Activated CD4-positive, alpha-beta T cell treated with anti-CD3 and anti-CD28 coated beads for 36 hours (primary cell): ENCODE measurements at regions of chr9 and their contacts with region 1.

Region 1: GRCh38 chr9:128159784-128160602 is at the start of gene BBLN:
- DNase-seq: peak; percentile 98
- ATAC-seq: peak; percentile 91
- H3K4me3 Mint-ChIP-seq: peak within 1 kb of the TSS; percentile 74
- H3K27ac Mint-ChIP-seq: peak within 1 kb of the TSS; percentile 90
- H3K4me1 Mint-ChIP-seq: peaks cover 19% of the 10 kb centered on the region
- H3K27me3 Mint-ChIP-seq: no peaks in the 10 kb centered on the region
- total RNA-seq, gene BBLN: 64.4 to 68.5 TPM

Region 2: DNA sequence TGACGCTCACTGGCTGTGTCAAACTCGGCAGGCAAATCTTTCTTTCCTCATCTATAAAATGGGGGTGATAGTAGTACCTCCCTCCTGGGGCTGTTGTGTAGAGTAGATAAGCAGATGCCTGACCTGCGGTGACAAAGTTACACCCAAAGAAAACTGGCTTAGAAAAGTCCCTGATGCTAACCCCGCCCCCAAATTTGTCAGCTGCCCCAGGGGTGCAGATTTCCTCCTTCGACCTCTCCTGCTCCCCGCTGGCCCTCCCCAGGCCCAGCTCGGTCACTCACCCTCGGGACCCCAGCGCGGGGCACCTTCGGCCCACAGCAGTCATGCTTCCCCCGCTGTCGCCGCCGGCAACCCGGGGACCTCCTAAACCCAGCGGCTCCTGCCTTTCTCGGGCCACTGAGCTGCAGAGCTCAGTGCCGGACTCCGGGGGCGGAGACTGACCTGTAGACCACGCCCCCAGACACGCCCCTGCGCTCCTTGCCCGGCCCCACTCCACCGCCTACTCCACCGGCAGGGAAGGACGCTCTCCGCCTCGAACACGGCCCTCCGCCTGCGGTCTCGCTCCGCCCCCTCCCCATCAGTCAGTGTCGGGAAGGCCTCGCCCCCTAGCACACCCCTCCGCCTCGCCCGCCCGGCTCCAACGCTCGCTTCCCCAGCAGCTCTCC is 389.0 kb before region 1 on chr9:
- CTCF ChIA-PET with region 1: no interaction called
- POLR2A ChIA-PET with region 1: no interaction called
- intact Hi-C with region 1: loop called in 1 of 2 experiments (anchors 1 kb)
- DNase-seq: peak; percentile 99
- ATAC-seq: peak; percentile 95
- H3K4me3 Mint-ChIP-seq: peak overlapping the region; percentile 80
- H3K27ac Mint-ChIP-seq: peak overlapping the region; percentile 80
- H3K4me1 Mint-ChIP-seq: peaks cover 59% of the 10 kb centered on the region
- H3K27me3 Mint-ChIP-seq: no peaks in the 10 kb centered on the region

Region 3: DNA sequence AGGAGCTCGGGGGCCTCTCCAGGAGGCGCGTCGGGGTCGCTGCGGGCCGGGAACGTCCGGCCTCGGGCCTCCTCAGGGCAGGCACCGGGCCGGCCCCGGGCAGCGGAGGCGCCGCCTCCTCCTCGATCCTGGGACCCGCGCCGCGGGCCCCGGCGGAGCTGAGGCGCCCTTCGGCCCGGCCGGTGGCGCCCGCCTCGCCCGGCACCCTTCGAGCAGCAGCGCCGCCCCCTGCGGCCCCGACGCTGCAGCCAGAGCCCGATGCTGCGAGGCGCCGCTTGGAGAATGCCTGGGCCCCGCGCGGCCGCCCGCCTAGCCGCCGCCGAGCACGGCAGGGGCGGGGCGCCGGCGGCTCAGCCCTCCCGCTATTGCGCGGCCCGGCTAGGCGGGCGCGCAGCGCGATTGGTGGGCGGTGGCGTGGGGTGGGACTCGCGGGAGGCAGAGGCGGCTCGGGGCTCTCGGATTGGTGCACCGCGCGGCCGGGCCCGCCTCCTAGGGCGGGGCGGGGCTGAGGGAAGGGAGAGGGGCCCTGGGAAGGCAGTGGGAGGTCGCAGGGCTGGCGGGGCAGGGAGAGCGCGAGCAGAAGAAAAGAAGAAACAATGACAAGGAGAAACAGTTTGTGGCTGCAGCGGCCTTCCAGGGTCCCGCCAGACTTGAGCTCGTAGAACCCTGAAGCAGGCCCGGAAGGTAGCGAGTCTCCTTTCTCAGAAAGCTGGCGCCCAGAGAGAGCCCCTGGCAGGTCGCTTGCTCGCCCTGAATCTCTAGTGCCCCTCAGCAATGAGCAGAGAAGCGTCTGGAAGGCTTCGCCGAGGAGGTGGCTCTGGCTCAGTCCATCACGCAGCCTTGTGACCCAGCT is 179.1 kb before region 1 on chr9 and contains the start of gene EEIG1:
- CTCF ChIA-PET with region 1: no interaction called
- POLR2A ChIA-PET with region 1: no interaction called
- intact Hi-C with region 1: loop called in 1 of 2 experiments (anchors 1 kb)
- DNase-seq: peak; percentile 99
- ATAC-seq: peak; percentile 87
- H3K4me3 Mint-ChIP-seq: peak within 1 kb of the TSS; percentile 97
- H3K27ac Mint-ChIP-seq: peak within 1 kb of the TSS; percentile 98
- H3K4me1 Mint-ChIP-seq: peaks cover 47% of the 10 kb centered on the region
- H3K27me3 Mint-ChIP-seq: no peaks in the 10 kb centered on the region
- total RNA-seq, gene EEIG1: 56.2 to 58.4 TPM

Region 4: GRCh38 chr9:128218518-128219389 is 58.8 kb after region 1 on chr9:
- CTCF ChIA-PET with region 1: no interaction called
- POLR2A ChIA-PET with region 1: no interaction called
- intact Hi-C with region 1: loop called in 1 of 2 experiments (anchors 1 kb)
- DNase-seq: peak; percentile 97
- ATAC-seq: peak; percentile 98
- H3K4me3 Mint-ChIP-seq: peak overlapping the region; percentile 71
- H3K27ac Mint-ChIP-seq: peak overlapping the region; percentile 74
- H3K4me1 Mint-ChIP-seq: peaks cover 11% of the 10 kb centered on the region
- H3K27me3 Mint-ChIP-seq: no peaks in the 10 kb centered on the region

Region 5: GRCh38 chr9:128322404-128323211 is 162.6 kb after region 1 on chr9 and contains the starts of genes COQ4 and TRUB2:
- CTCF ChIA-PET with region 1: no interaction called
- POLR2A ChIA-PET with region 1: no interaction called
- intact Hi-C with region 1: loop called in 1 of 2 experiments (anchors 1 kb)
- DNase-seq: peak; percentile 96
- ATAC-seq: peak; percentile 90
- H3K4me3 Mint-ChIP-seq: peak within 1 kb of the TSS; percentile 87
- H3K27ac Mint-ChIP-seq: peak within 1 kb of the TSS; percentile 93
- H3K4me1 Mint-ChIP-seq: peaks cover 19% of the 10 kb centered on the region
- H3K27me3 Mint-ChIP-seq: no peaks in the 10 kb centered on the region
- total RNA-seq, gene COQ4: 32.1 to 38.8 TPM
- total RNA-seq, gene TRUB2: 29.5 to 37.5 TPM

Region 6: GRCh38 chr9:128504485-128505413 is 344.8 kb after region 1 on chr9 and contains the start of gene GLE1:
- CTCF ChIA-PET with region 1: no interaction called
- POLR2A ChIA-PET with region 1: no interaction called
- intact Hi-C with region 1: loop called in 1 of 2 experiments (anchors 1 kb)
- DNase-seq: peak; percentile 98
- ATAC-seq: peak; percentile 99
- H3K4me3 Mint-ChIP-seq: peak within 1 kb of the TSS; percentile 95
- H3K27ac Mint-ChIP-seq: peak within 1 kb of the TSS; percentile 99
- H3K4me1 Mint-ChIP-seq: peaks cover 21% of the 10 kb centered on the region
- H3K27me3 Mint-ChIP-seq: no peaks in the 10 kb centered on the region
- total RNA-seq, gene GLE1: 52.5 to 54.4 TPM

Region 7: DNA sequence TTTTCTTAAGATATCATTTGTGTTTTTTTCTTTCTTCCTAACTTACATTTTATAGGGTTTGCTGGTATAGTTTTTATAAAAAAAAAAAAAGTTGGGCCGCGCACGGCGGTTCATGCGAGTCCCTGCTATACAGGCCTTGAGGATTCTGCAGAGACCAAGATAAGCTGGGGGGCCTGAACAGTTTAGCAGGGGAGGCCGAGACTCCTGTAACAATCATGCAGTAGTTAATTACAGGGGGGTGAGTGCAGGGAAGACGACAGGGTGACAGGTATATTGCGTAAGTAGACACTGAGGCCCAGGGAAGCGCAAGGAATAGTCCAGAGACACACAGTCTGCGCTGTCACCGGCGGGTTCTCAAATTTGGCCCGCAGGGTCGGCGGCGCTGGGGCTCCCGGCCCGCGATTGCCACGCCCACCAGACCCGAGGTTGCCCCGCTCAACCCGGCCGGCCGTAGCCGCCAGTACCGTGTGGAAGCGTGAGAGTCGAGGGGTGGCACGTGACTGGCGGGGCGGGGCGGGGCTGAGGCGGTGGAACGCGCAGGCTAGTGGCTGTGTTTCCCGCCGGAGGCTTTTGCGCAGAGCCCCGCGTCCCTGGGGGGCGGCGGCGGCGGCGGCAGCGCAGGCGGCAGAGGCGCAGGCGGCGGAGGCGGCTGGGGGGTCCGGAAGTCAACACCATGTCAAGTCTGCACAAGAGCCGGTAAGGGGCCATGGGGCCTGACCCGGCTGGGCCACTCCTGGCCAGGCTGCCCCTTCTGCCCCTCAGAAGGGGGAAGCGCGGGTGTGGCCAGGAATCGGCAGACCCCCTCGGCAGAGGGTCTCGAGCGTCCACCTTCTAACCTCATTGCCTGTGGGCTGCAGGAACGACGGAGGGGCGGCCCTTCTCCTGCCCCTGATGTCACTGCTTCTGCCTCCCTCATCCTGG is 626.9 kb after region 1 on chr9 and contains the start of gene TBC1D13:
- CTCF ChIA-PET with region 1: no interaction called
- POLR2A ChIA-PET with region 1: no interaction called
- intact Hi-C with region 1: loop called in 1 of 2 experiments (anchors 1 kb)
- DNase-seq: peak; percentile 94
- ATAC-seq: peak; percentile 97
- H3K4me3 Mint-ChIP-seq: peak within 1 kb of the TSS; percentile 87
- H3K27ac Mint-ChIP-seq: peak within 1 kb of the TSS; percentile 87
- H3K4me1 Mint-ChIP-seq: peaks cover 18% of the 10 kb centered on the region
- H3K27me3 Mint-ChIP-seq: no peaks in the 10 kb centered on the region
- total RNA-seq, gene TBC1D13: 10.5 to 14.0 TPM